Left ventricle myocardium superior (tissue), 1 donor: ENCODE measurements at regions of chr1 and their contacts with region 1.

Region 1: DNA sequence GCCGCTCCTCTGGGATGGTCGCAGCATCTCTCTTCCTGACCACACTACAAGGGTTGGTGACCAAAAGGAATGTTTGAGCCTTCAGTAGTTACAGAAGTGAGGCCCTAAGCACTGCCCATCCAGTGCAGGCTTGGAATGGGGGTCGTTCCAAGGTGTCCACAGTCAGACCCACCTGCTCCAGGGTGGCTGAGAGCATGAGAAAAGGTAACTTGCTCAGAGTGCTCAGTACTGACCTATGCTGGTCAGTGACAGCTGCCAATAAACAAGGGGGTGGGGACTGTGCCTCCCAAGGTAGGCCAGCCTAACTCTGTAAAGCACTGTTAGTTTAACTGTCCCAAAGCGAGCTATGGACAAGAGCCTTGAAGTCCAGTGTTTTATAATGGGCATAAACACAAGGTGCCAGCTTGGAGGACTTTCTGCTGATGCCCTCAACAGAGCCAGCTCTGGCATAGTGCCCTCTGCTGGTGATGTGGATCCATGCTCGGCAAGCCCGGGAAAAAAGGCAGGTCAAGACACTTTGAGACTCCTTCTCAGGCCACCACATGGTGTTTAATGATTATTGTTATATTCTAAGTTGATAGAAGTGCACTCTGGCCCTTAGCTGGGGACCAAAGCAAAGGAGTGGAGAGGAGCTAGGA is 78.1 kb upstream of the DNAH14 start:
- DNase-seq: peak; percentile 57
- ATAC-seq: peak; percentile 63

Region 2: GRCh38 chr1:224519874-224520273 is 331.5 kb before region 1 on chr1:
- intact Hi-C with region 1: loop called (anchors 5 kb)
- DNase-seq: no peak
- ATAC-seq: no peak

Region 3: DNA sequence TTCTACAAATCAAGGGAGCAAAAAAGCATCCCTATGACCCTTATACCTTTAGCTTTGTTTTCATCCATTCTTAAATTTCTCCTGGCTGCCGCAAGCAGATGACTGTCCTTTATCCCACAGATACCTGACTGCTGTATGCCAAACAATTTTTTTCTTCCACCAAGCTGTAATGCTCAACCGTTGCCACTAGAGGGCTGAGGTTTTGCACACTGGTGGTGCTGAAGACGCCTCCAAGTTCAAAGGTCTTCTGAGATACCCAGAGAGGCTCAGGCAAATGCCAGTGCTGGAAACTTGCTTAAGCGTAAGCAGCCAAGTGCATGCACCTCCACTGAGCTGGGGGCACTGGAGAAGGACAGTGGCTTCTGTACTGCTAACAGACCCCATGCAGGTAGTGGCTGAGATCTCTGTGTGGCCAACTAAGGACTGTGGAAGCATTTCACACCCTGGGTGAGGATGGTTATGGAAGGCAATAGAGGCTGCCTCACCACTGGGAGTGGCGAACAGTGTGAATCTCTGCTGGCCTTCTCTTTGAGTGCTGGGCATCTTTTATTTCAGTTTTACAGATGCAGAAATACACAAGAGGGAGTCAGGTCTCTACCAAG is 206.7 kb before region 1 on chr1:
- intact Hi-C with region 1: loop called (anchors 10 kb)
- DNase-seq: no peak
- ATAC-seq: peak; percentile 51